ENCODE measurements at regions of chr20 and their contacts with region 1.

Region 1: DNA sequence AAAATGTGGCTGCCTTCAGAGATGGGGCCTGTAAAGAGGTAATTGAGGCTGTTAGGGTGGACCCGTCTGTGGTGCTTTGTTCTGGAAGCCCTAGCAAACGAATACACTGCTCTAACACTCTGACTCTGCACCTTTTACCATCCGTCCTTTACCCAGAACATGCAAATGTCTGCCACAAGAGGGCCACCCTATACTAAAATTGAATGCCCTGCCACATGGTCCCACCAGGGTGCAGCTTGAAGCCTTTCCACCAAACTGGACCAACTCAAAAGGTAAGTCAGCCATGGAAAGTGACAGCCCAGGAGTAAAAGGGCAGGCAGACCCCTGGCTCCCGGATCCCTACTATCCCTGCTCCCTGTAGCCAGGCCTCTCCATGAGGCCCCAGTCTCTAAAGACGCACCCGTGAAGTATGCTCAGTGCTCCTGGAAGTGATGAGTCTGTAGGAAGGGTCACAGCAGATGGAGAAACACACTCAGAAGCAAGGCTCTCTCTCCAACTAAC is 5.8 kb upstream of the BFSP1 start:
- DNase-seq: peak; percentile 78
- H3K4me3 ChIP-seq: no peak overlapping the region; a peak in 1 of 4 replicates
- H3K27ac ChIP-seq: no peak overlapping the region
- H3K4me1 ChIP-seq: peaks cover 0 to 12% of the 10 kb centered on the region in 2 experiments; a peak in 3 of 4 replicates
- H3K27me3 ChIP-seq: no peaks in the 10 kb centered on the region
- CTCF ChIP-seq: peak; percentile 91
- EP300 ChIP-seq: no peak
- RAD21 ChIP-seq: peak; percentile 98

Region 2: GRCh38 chr20:17369506-17369905 is 167.5 kb before region 1 on chr20:
- CTCF ChIA-PET with region 1: no interaction called
- POLR2A ChIA-PET with region 1: no interaction called
- DNase-seq: no peak
- H3K4me3 ChIP-seq: no peak overlapping the region
- H3K27ac ChIP-seq: no peak overlapping the region
- H3K4me1 ChIP-seq: no peaks in the 10 kb centered on the region
- H3K27me3 ChIP-seq: no peaks in the 10 kb centered on the region
- CTCF ChIP-seq: no peak
- EP300 ChIP-seq: no peak
- RAD21 ChIP-seq: no peak

Region 3: DNA sequence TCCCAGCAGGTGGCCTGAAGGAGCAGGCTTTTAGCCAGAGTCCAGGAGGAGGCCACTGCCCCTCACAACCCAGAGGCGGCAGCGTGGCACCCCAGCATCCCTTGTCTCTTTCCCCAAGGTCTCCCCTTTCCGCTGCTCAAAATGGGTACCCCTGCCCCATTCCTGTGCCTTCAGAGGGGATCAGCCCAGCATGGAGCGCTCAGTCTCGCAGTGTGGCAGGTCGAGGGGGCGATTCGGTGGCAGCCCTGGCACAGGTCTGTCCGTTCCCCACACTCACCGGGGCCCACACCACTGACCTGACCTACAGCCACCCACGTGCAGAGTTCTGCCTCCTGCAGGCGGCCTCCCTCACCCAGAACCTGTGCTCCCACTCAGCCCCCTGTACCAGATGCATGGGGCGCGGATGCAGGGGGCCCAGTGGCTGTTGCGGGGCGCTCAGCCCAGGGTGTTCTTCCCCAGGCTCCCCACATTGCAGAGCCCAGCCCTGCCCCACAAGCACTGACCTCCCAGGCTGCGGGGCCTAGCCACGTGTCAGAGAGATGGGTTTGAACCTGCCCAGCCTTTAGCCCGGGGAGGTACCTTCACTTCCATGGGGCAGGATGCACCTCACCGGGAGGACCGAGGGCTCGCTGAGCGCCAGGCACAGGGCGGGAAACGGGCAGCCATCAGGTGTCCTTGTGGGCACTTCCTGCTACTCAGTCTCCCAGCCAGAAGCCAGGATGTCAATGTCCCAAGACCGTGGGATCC is 74.7 kb after region 1 on chr20:
- CTCF ChIA-PET with region 1: interaction called, 96 read pairs
- POLR2A ChIA-PET with region 1: no interaction called
- DNase-seq: peak; percentile 43
- H3K4me3 ChIP-seq: no peak overlapping the region
- H3K27ac ChIP-seq: peak overlapping the region in 1 of 2 experiments; percentile 27; a peak in 1 of 4 replicates
- H3K4me1 ChIP-seq: no peaks in the 10 kb centered on the region
- H3K27me3 ChIP-seq: no peaks in the 10 kb centered on the region
- CTCF ChIP-seq: peak; percentile 41; the same call in 1 of the 2 replicates
- EP300 ChIP-seq: no peak
- RAD21 ChIP-seq: peak; percentile 18; the same call in 1 of the 2 replicates

Region 4: GRCh38 chr20:17898548-17898994 is 361.6 kb after region 1 on chr20:
- CTCF ChIA-PET with region 1: interaction called, 11 read pairs
- POLR2A ChIA-PET with region 1: no interaction called
- DNase-seq: peak; percentile 69
- H3K4me3 ChIP-seq: no peak overlapping the region; a peak in 1 of 4 replicates
- H3K27ac ChIP-seq: no peak overlapping the region
- H3K4me1 ChIP-seq: peaks cover 2 to 5% of the 10 kb centered on the region in 2 experiments; a peak in 2 of 4 replicates
- H3K27me3 ChIP-seq: no peaks in the 10 kb centered on the region
- CTCF ChIP-seq: peak; percentile 91
- EP300 ChIP-seq: no peak
- RAD21 ChIP-seq: peak; percentile 95